Mammary epithelial cell (primary cell): ENCODE measurements at regions of chr5 and their contacts with region 1.

Region 1: DNA sequence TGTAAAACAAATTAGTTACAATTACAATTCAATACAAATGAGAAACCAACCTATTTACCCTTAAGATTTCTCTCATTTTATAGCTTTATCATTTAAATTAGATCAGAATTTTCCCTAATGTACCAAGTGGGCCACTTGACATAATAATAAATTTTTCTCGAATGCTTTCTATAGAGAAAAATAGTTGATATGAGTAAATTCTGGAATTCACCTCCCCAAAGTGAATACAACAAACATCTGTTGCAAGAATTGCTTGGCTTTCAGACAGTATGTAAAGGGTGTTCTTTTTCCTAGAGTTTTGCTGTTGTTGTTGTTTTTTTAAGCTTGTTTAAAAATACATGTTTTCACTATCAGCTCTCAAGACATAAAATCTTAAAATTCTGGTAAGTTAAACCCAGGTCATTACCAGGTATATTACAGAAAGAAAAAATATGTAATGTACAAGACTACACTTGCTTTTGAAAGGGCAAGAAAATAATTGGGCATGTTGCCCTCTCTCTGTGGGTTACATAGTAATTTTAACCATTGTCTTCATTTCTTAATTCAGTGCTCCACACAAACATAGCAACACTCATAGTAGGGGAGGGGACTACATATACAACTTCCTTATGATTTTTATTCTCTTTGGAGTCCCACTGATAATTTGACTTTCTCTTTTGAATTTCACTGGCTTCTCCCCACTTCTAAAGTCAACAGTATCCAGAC is 200.6 kb downstream of the ARL15 start:
- DNase-seq: peak; percentile 66
- H3K4me3 ChIP-seq: no peak overlapping the region
- H3K27ac ChIP-seq: peak overlapping the region; percentile 29
- H3K4me1 ChIP-seq: peaks cover 3% of the 10 kb centered on the region
- H3K27me3 ChIP-seq: no peaks in the 10 kb centered on the region
- CTCF ChIP-seq: no peak

Region 2: DNA sequence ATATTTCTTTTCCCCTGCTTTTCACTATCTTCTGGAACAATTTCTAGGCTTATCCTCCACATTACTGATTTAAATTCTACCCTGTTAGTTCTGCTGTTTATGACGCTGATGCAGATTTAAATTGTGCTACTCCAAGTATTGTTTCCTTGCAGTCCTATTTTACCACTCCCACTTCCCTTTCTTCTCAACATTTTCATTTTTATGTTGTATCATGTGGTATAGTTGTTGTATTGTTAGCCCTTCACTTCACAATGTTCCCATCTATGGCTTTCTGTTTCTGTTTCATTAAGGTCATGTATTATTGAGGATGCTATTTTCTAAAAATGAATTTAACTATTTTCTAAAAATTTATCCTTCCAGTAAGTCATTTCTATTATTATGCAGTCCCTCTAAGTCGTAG is 295.0 kb before region 1 on chr5:
- CTCF ChIA-PET with region 1: no interaction called
- dilution Hi-C with region 1: no loop called
- in situ Hi-C with region 1: no loop called
- intact Hi-C with region 1: no loop called
- DNase-seq: no peak
- H3K4me3 ChIP-seq: no peak overlapping the region
- H3K27ac ChIP-seq: no peak overlapping the region
- H3K4me1 ChIP-seq: no peaks in the 10 kb centered on the region
- H3K27me3 ChIP-seq: peaks cover 4% of the 10 kb centered on the region
- CTCF ChIP-seq: no peak

Region 3: DNA sequence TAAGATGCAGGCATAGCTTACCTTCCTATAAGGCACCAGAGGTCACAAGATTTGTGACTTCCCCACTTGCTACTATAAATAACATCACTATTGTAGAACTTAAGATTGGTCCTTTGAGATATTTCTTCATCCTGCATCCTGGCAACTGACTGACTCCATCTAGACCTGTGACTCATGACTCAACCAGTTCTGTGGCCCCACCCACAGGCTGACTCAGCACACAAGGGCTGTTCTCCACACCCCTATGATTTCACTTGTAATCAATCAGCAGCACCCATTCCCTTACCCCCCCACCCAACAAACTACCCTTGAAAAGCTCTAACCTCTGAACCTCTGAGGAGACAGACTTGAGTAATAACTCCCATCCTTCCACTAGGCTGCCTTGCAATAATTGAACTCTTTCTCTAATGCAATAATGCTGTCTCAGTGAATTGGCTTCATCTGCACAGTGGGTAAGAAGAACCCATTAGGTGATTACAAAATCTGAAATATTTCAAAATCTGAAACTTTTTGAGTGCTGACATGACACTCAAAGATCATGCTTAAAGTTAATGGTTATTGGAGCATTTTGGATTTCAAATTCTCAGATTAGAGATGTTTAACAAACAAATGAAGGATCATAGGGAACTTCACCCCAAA is 96.1 kb before region 1 on chr5:
- CTCF ChIA-PET with region 1: no interaction called
- dilution Hi-C with region 1: loop called (anchors 5 kb)
- in situ Hi-C with region 1: no loop called
- intact Hi-C with region 1: no loop called
- DNase-seq: peak; percentile 88
- H3K4me3 ChIP-seq: no peak overlapping the region
- H3K27ac ChIP-seq: peak overlapping the region; percentile 2
- H3K4me1 ChIP-seq: peaks cover 5% of the 10 kb centered on the region
- H3K27me3 ChIP-seq: no peaks in the 10 kb centered on the region
- CTCF ChIP-seq: no peak